ENCODE measurements at regions of chr9 and their contacts with region 1.

Region 1: DNA sequence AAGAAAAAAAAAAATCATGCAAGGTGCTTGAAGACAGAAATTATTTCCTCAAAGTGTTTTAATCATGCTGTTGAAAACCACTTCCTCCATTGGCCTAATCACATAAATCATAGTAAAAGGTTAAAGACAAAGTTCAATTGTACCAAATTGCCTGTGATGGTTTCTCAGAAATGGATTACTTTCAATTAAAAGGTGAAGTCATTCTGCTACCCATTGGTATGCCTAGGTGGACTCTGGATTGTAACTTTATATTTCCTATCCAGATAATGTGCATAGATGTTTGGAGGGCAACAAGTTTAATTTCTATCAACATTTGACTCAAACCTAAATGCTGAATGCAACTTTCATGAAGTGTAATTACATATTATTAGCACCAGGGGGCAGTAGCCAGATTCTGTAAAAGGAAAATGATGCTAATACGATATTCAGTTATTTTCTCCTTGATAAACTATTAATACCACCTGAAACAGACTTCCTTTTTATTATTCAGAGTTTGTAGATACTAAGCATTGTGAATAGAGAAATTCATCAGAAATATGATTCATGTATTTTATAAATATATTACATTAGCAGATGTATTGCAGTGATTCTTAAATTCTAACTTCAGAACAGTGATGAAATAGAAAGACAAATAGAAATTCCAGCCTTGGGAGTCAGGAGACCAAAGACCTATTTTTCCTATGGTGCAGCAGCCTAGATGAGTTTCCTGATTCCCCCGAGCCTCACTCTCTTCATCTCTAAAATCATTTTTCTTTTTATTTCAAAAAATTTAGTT is 148.2 kb downstream of the CAAP1 start:
- DNase-seq: no peak
- H3K4me3 ChIP-seq: no peak overlapping the region
- H3K27ac ChIP-seq: no peak overlapping the region
- H3K4me1 ChIP-seq: no peaks in the 10 kb centered on the region
- H3K27me3 ChIP-seq: no peaks in the 10 kb centered on the region
- CTCF ChIP-seq: peak; percentile 69 to 82 (median 72)
- POLR2A ChIP-seq: no peak

Region 2: DNA sequence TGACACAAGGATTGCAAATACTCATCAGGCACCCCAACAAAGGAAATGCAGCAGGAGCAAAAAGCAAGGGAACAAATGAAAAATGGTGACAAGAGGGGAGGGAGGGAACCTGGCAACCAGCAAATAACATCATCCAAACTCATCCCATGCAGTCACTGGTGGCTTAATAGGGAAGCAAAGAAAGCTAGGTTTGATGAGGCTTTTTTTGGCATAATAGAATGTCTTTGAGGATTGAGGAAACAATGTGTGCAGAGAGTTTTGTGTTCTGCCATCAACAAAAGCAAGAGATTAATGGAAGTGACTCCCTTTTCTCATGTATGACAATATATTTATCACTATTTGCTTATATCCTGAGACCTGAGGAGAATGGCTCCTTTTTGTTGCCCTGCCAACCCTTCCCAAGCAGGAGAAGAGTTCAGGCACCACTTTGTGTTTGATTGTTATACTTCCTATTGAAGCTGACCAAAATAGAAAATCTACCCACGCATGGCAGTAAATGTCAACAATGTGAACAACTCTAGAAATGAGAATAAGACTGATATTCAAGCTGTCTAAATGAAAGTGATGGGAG is 227.5 kb before region 1 on chr9:
- intact Hi-C with region 1: no loop called
- DNase-seq: no peak
- H3K4me3 ChIP-seq: no peak overlapping the region
- H3K27ac ChIP-seq: no peak overlapping the region
- H3K4me1 ChIP-seq: no peaks in the 10 kb centered on the region
- H3K27me3 ChIP-seq: no peaks in the 10 kb centered on the region
- CTCF ChIP-seq: no peak
- POLR2A ChIP-seq: no peak

Region 3: DNA sequence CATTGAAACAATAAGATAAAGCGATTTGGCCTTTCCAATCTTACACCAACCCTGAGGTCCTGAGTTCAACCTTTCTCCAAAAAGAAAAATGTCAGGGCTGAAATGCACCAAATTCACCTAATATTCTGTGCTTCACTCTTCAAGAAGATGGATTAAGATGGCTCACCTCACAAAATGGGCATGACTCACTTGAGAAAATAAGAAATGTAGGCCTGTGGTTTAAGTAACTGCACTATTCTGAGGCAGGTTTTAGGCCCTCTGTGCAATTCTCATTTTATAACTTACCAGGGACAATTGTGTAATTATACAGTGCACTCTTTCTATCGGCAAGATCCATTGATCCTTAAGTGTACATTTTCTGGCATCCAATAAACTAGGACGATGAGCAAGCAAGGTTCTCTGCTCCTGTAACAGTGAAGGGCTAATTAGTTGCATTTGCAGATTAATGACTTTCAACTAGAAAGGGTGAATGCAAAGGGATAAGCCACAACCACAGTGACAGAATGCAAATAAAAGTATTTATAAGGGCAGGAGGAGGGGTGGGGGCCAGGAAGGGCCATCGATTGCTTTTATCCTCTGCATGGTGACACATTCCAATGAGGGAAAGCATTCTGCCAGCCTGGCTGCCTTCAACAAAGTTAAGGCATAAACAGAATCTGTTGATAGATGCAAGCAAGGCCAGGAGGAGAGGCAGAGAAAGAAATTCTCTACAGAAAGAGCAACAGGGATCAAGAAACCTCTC is 66.2 kb before region 1 on chr9:
- intact Hi-C with region 1: no loop called
- DNase-seq: no peak
- H3K4me3 ChIP-seq: no peak overlapping the region
- H3K27ac ChIP-seq: no peak overlapping the region
- H3K4me1 ChIP-seq: no peaks in the 10 kb centered on the region
- H3K27me3 ChIP-seq: no peaks in the 10 kb centered on the region
- CTCF ChIP-seq: no peak
- POLR2A ChIP-seq: no peak

Region 4: GRCh38 chr9:26856413-26857032 is 112.1 kb after region 1 on chr9:
- intact Hi-C with region 1: loop called (anchors 10 kb)
- DNase-seq: peak in 4 of 7 donors; percentile 27 to 48 (median 38)
- H3K4me3 ChIP-seq: no peak overlapping the region
- H3K27ac ChIP-seq: no peak overlapping the region
- H3K4me1 ChIP-seq: peaks cover 0 to 3% of the 10 kb centered on the region in 2 donors
- H3K27me3 ChIP-seq: no peaks in the 10 kb centered on the region
- CTCF ChIP-seq: peak in 5 of 6 experiments; percentile 28 to 64 (median 49)
- POLR2A ChIP-seq: no peak

Region 5: GRCh38 chr9:26863074-26863473 is 118.7 kb after region 1 on chr9:
- intact Hi-C with region 1: loop called (anchors 10 kb)
- DNase-seq: no peak
- H3K4me3 ChIP-seq: no peak overlapping the region
- H3K27ac ChIP-seq: no peak overlapping the region
- H3K4me1 ChIP-seq: peaks cover 0 to 3% of the 10 kb centered on the region in 2 donors
- H3K27me3 ChIP-seq: no peaks in the 10 kb centered on the region
- CTCF ChIP-seq: peak in 5 of 6 experiments; percentile 15 to 49 (median 36)
- POLR2A ChIP-seq: no peak

Region 6: DNA sequence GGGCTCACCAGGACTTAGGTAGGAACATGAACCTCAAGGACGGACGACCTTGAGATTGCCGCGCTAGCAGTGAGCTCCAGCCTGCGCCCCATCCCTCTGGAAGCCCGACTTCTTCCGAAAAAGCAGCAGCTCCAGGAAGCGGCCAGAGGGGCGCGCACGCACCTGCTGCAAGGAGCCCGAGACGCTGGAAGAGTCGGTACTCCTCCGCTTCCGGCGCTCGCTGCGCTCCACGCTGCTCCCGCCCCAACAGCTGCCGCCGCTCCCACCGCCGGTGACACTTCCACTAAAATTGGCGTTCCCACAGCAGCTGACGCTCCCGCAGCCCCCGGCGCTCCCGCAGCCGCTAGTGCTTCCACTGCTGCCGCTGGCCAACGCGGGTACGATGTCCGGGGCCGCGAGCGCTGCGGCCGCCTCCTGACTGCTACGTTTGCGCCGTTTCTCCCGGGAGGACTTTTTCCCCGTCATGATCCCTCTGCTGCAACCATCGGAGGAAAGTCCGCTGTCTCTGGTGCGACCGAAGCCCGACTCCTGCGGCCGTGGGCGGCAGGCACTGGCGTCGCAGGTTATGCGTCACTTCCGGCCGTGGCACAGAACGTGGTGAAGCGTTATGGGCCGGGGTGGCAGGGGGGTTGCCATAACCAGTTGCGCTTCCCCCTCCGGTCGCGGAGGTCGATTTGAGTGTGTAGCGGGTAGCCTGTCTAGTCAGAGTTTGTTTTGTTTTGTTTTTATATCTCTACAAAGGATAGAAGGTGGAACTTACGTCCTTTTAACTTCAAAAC is 148.1 kb after region 1 on chr9 and contains the start of gene CAAP1:
- intact Hi-C with region 1: no loop called
- DNase-seq: peak; percentile 93 to 98 (median 96)
- H3K4me3 ChIP-seq: peak within 1 kb of the TSS; percentile 17 to 85 (median 78)
- H3K27ac ChIP-seq: peak within 1 kb of the TSS; percentile 88 to 98 (median 98)
- H3K4me1 ChIP-seq: peaks cover 17 to 42% of the 10 kb centered on the region in 2 donors
- H3K27me3 ChIP-seq: no peaks in the 10 kb centered on the region
- CTCF ChIP-seq: peak; percentile 14 to 53 (median 46)
- POLR2A ChIP-seq: peak; percentile 61 to 91
- total RNA-seq, gene CAAP1: 19.2 to 62.4 (median 34.8) TPM

Region 7: GRCh38 chr9:26975693-26976059 is 231.3 kb after region 1 on chr9:
- intact Hi-C with region 1: loop called (anchors 5 to 10 kb)
- DNase-seq: peak; percentile 25 to 74 (median 43)
- H3K4me3 ChIP-seq: no peak overlapping the region
- H3K27ac ChIP-seq: no peak overlapping the region
- H3K4me1 ChIP-seq: no peaks in the 10 kb centered on the region
- H3K27me3 ChIP-seq: no peaks in the 10 kb centered on the region
- CTCF ChIP-seq: peak; percentile 32 to 75 (median 66)
- POLR2A ChIP-seq: no peak

Region 8: GRCh38 chr9:27276193-27277030 is 532.0 kb after region 1 on chr9:
- intact Hi-C with region 1: loop called in 1 of 2 experiments (anchors 10 kb)
- DNase-seq: peak in 3 of 7 donors; percentile 19 to 27 (median 26)
- H3K4me3 ChIP-seq: no peak overlapping the region
- H3K27ac ChIP-seq: no peak overlapping the region
- H3K4me1 ChIP-seq: no peaks in the 10 kb centered on the region
- H3K27me3 ChIP-seq: no peaks in the 10 kb centered on the region
- CTCF ChIP-seq: peak; percentile 69 to 92 (median 77)
- POLR2A ChIP-seq: no peak